CD8-positive, alpha-beta T cell (primary cell): ENCODE measurements at regions of chr19 and their contacts with region 1.

Region 1: GRCh38 chr19:47348819-47349795 is at the start of gene DHX34:
- DNase-seq: peak; percentile 98 to 100 (median 99)
- ATAC-seq: peak; percentile 98
- H3K4me3 ChIP-seq: peak within 1 kb of the TSS; percentile 88 to 93
- H3K4me3 Mint-ChIP-seq: peak within 1 kb of the TSS; percentile 98
- H3K27ac ChIP-seq: peak within 1 kb of the TSS; percentile 71 to 72
- H3K27ac Mint-ChIP-seq: peak within 1 kb of the TSS; percentile 91
- H3K4me1 ChIP-seq: peaks cover 25% of the 10 kb centered on the region
- H3K4me1 Mint-ChIP-seq: peaks cover 38% of the 10 kb centered on the region
- H3K27me3 ChIP-seq: no peaks in the 10 kb centered on the region
- H3K27me3 Mint-ChIP-seq: peaks cover 3% of the 10 kb centered on the region
- CTCF ChIP-seq: peak; percentile 72
- total RNA-seq, gene DHX34: 7.7 to 8.1 TPM

Region 2: GRCh38 chr19:47047763-47048405 is 301.2 kb before region 1 on chr19:
- CTCF ChIA-PET with region 1: no interaction called
- POLR2A ChIA-PET with region 1: no interaction called
- intact Hi-C with region 1: loop called in 1 of 2 experiments (anchors 1 kb)
- DNase-seq: peak; percentile 22 to 85 (median 65)
- ATAC-seq: peak; percentile 37
- H3K4me3 ChIP-seq: peak overlapping the region; percentile 67 to 96
- H3K4me3 Mint-ChIP-seq: peak overlapping the region; percentile 98
- H3K27ac ChIP-seq: peak overlapping the region; percentile 31 to 62
- H3K27ac Mint-ChIP-seq: peak overlapping the region; percentile 91
- H3K4me1 ChIP-seq: peaks cover 8% of the 10 kb centered on the region
- H3K4me1 Mint-ChIP-seq: peaks cover 20% of the 10 kb centered on the region
- H3K27me3 ChIP-seq: no peaks in the 10 kb centered on the region
- H3K27me3 Mint-ChIP-seq: no peaks in the 10 kb centered on the region
- CTCF ChIP-seq: no peak

Region 3: DNA sequence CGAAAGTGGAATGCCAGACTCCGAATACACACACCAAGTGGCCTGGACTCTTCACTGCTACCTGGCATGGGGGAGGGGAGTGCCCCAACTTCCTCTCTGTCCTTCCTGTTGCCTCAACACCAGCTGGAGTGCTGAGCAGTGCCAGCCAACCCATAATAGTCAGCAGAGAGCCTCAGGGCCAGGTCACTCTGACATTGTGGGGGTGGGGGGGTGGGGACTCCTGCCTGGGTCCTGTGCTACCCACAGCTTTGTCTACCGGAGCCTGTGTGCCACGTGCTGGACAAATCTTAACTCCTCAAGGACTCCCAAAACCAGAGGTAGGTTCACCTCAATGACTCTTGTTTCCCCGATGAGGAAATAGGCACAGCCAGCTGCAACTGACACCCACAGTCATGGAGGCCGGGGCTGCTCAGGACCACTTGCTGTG is 12.2 kb before region 1 on chr19:
- CTCF ChIA-PET with region 1: interaction called, 12 read pairs
- POLR2A ChIA-PET with region 1: interaction called, 6 read pairs
- intact Hi-C with region 1: no loop called
- DNase-seq: peak in 3 of 9 experiments; percentile 16 to 50 (median 23)
- ATAC-seq: no peak
- H3K4me3 ChIP-seq: no peak overlapping the region
- H3K4me3 Mint-ChIP-seq: no peak overlapping the region
- H3K27ac ChIP-seq: peak overlapping the region in 1 of 2 experiments; percentile 31
- H3K27ac Mint-ChIP-seq: no peak overlapping the region
- H3K4me1 ChIP-seq: peaks cover 5% of the 10 kb centered on the region
- H3K4me1 Mint-ChIP-seq: peaks cover 9% of the 10 kb centered on the region
- H3K27me3 ChIP-seq: no peaks in the 10 kb centered on the region
- H3K27me3 Mint-ChIP-seq: peaks cover 4% of the 10 kb centered on the region
- CTCF ChIP-seq: no peak

Region 4: GRCh38 chr19:47381653-47382279 is 32.7 kb after region 1 on chr19:
- CTCF ChIA-PET with region 1: interaction called, 3 read pairs
- POLR2A ChIA-PET with region 1: interaction called, 3 read pairs
- intact Hi-C with region 1: loop called in 1 of 2 experiments (anchors 5 kb)
- DNase-seq: peak in 7 of 9 experiments; percentile 12 to 73 (median 38)
- ATAC-seq: peak; percentile 68
- H3K4me3 ChIP-seq: no peak overlapping the region
- H3K4me3 Mint-ChIP-seq: no peak overlapping the region
- H3K27ac ChIP-seq: peak overlapping the region; percentile 19 to 42
- H3K27ac Mint-ChIP-seq: peak overlapping the region; percentile 77
- H3K4me1 ChIP-seq: peaks cover 17% of the 10 kb centered on the region
- H3K4me1 Mint-ChIP-seq: peaks cover 25% of the 10 kb centered on the region
- H3K27me3 ChIP-seq: no peaks in the 10 kb centered on the region
- H3K27me3 Mint-ChIP-seq: no peaks in the 10 kb centered on the region
- CTCF ChIP-seq: no peak

Region 5: GRCh38 chr19:47391510-47392223 is 42.6 kb after region 1 on chr19:
- CTCF ChIA-PET with region 1: interaction called, 24 read pairs
- POLR2A ChIA-PET with region 1: no interaction called
- intact Hi-C with region 1: no loop called
- DNase-seq: peak; percentile 69 to 89 (median 81)
- ATAC-seq: peak; percentile 79
- H3K4me3 ChIP-seq: no peak overlapping the region
- H3K4me3 Mint-ChIP-seq: no peak overlapping the region
- H3K27ac ChIP-seq: no peak overlapping the region
- H3K27ac Mint-ChIP-seq: no peak overlapping the region
- H3K4me1 ChIP-seq: no peaks in the 10 kb centered on the region
- H3K4me1 Mint-ChIP-seq: peaks cover 4% of the 10 kb centered on the region
- H3K27me3 ChIP-seq: peaks cover 0 to 3% of the 10 kb centered on the region in 2 experiments
- H3K27me3 Mint-ChIP-seq: peaks cover 22% of the 10 kb centered on the region
- CTCF ChIP-seq: peak; percentile 88

Region 6: DNA sequence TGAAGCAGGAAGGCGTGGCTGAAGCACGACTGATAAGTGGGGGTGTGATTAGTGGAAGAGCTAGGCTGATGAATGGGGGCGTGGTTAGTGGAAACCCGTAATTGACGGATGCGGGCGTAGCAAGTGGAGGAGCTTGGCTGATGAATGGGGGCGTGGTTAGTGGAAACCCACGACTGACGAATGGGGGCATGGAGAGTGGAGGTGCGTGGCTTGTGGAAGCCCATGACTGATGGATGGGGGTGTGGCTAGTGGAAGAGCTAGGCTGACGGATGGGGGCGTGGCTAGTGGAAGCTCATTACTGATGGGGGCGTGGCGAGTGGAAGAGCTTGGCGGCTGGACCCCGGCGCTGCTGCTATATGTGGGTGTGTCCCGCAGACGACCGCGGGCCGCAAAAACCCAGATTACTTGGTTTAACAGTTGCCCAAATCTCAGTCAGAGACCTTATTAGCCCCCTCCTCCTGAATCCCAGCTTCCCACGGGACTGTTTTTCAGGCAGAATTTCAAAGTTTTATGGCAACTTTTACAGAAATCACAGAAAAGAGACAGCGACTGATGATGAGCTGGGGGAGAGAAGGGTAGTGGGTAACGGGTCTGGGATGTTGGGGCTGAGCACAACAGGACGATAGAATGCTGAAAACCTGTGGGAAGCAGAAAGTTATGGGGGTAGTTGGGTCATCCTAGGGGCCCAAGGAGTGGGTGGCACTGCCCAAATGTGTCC is 79.2 kb after region 1 on chr19:
- CTCF ChIA-PET with region 1: interaction called, 6 read pairs
- POLR2A ChIA-PET with region 1: interaction called, 3 read pairs
- intact Hi-C with region 1: loop called in 1 of 2 experiments (anchors 5 kb)
- DNase-seq: peak; percentile 56 to 94 (median 74)
- ATAC-seq: peak; percentile 86
- H3K4me3 ChIP-seq: peak overlapping the region in 1 of 2 experiments; percentile 2
- H3K4me3 Mint-ChIP-seq: no peak overlapping the region
- H3K27ac ChIP-seq: no peak overlapping the region
- H3K27ac Mint-ChIP-seq: no peak overlapping the region
- H3K4me1 ChIP-seq: peaks cover 33% of the 10 kb centered on the region
- H3K4me1 Mint-ChIP-seq: peaks cover 12% of the 10 kb centered on the region
- H3K27me3 ChIP-seq: peaks cover 20 to 34% of the 10 kb centered on the region in 2 experiments
- H3K27me3 Mint-ChIP-seq: peaks cover 56% of the 10 kb centered on the region
- CTCF ChIP-seq: no peak